Mammary epithelial cell (primary cell): ENCODE measurements at regions of chr2 and their contacts with region 1.

Region 1: GRCh38 chr2:14577843-14578242 is 54.7 kb upstream of the LRATD1 start:
- DNase-seq: peak; percentile 54
- H3K4me3 ChIP-seq: no peak overlapping the region
- H3K27ac ChIP-seq: no peak overlapping the region
- H3K4me1 ChIP-seq: peaks cover 6% of the 10 kb centered on the region
- H3K27me3 ChIP-seq: no peaks in the 10 kb centered on the region
- CTCF ChIP-seq: no peak

Region 2: DNA sequence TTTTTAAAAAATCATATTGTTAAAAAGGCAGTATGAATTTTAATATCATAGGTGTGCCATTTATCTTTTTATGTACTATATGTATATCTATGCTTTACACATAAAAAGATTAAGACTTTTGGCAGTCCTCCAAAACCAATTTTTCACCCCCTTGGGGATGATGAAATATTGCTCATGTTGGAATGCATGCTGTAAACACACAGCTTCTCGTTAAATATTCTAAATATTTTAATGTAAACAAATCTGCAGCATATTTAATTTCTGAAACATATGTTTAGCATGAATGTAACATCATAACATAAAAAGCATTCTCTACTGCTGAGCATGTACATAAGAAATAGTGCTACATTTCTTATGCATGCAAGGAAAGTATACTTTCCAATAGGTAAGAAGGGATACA is 429.6 kb before region 1 on chr2:
- CTCF ChIA-PET with region 1: no interaction called
- dilution Hi-C with region 1: no loop called
- in situ Hi-C with region 1: no loop called
- intact Hi-C with region 1: no loop called
- DNase-seq: no peak
- H3K4me3 ChIP-seq: no peak overlapping the region
- H3K27ac ChIP-seq: no peak overlapping the region
- H3K4me1 ChIP-seq: no peaks in the 10 kb centered on the region
- H3K27me3 ChIP-seq: no peaks in the 10 kb centered on the region
- CTCF ChIP-seq: no peak

Region 3: DNA sequence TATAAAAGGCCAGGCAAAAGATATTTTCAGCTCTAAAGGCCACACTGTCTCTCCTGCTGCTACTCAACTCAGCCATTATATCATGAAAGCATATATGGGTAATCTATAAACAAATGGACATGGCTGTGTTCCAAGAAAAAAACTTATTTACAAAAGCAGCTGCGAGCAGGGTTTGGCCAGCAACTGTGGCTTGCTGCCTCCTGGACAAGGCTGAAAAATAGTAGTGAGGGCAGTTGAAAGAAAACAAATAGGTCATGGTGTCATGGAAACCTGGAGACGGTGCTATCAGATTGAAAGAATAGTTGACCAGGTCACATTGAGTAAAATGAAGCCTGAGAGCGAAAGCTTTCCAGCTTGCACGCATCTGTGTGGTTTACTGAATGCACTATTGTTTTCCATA is 34.5 kb before region 1 on chr2:
- CTCF ChIA-PET with region 1: no interaction called
- dilution Hi-C with region 1: no loop called
- in situ Hi-C with region 1: no loop called
- intact Hi-C with region 1: no loop called
- DNase-seq: no peak
- H3K4me3 ChIP-seq: no peak overlapping the region
- H3K27ac ChIP-seq: no peak overlapping the region
- H3K4me1 ChIP-seq: no peaks in the 10 kb centered on the region
- H3K27me3 ChIP-seq: no peaks in the 10 kb centered on the region
- CTCF ChIP-seq: no peak

Region 4: GRCh38 chr2:14628901-14629300 is 51.1 kb after region 1 on chr2:
- CTCF ChIA-PET with region 1: no interaction called
- dilution Hi-C with region 1: loop called (anchors 10 kb)
- in situ Hi-C with region 1: no loop called
- intact Hi-C with region 1: no loop called
- DNase-seq: peak; percentile 88
- H3K4me3 ChIP-seq: no peak overlapping the region
- H3K27ac ChIP-seq: peak overlapping the region; percentile 65
- H3K4me1 ChIP-seq: peaks cover 31% of the 10 kb centered on the region
- H3K27me3 ChIP-seq: no peaks in the 10 kb centered on the region
- CTCF ChIP-seq: no peak